Esophagus muscularis mucosa (tissue), 4 donors: ENCODE measurements at regions of chr1 and their contacts with region 1.

Region 1: GRCh38 chr1:33295450-33296081 is 25.3 kb downstream of the A3GALT2 start:
- DNase-seq: peak; percentile 96
- H3K4me3 ChIP-seq: no peak overlapping the region
- H3K27ac ChIP-seq: peak overlapping the region; percentile 48 to 75 (median 62)
- H3K4me1 ChIP-seq: peaks cover 16 to 55% (median 39%) of the 10 kb centered on the region in 4 donors
- H3K27me3 ChIP-seq: no peaks in the 10 kb centered on the region
- CTCF ChIP-seq: peak; percentile 97 to 99 (median 98)
- EP300 ChIP-seq: no peak
- POLR2A ChIP-seq: no peak

Region 2: DNA sequence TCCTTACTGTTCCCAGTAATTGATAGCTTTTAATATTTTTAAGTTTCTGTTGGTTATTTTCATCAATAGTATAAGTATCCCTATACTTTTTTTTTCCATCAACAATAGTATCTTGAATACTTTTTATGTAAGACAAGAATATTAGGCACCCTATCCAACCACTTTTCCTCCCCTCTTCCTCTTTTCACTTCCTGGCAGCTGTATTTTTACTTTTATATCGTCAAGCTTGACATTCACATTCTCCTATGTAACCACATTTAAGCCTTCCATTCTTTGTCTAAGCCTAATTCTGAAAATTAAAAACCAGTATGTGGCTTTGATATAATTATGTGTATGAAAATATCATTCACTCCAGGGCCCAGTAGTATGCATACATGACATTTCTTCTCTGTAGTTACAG is 1213.5 kb before region 1 on chr1:
- intact Hi-C with region 1: no loop called
- DNase-seq: no peak
- H3K4me3 ChIP-seq: no peak overlapping the region
- H3K27ac ChIP-seq: no peak overlapping the region
- H3K4me1 ChIP-seq: no peaks in the 10 kb centered on the region
- H3K27me3 ChIP-seq: no peaks in the 10 kb centered on the region
- CTCF ChIP-seq: no peak
- EP300 ChIP-seq: no peak
- POLR2A ChIP-seq: no peak

Region 3: GRCh38 chr1:33137800-33138199 is 157.8 kb before region 1 on chr1:
- intact Hi-C with region 1: loop called (anchors 10 kb)
- DNase-seq: no peak
- H3K4me3 ChIP-seq: no peak overlapping the region
- H3K27ac ChIP-seq: no peak overlapping the region
- H3K4me1 ChIP-seq: peaks cover 0 to 10% (median 8%) of the 10 kb centered on the region in 4 donors
- H3K27me3 ChIP-seq: no peaks in the 10 kb centered on the region
- CTCF ChIP-seq: peak; percentile 26 to 50 (median 39)
- EP300 ChIP-seq: no peak
- POLR2A ChIP-seq: no peak

Region 4: DNA sequence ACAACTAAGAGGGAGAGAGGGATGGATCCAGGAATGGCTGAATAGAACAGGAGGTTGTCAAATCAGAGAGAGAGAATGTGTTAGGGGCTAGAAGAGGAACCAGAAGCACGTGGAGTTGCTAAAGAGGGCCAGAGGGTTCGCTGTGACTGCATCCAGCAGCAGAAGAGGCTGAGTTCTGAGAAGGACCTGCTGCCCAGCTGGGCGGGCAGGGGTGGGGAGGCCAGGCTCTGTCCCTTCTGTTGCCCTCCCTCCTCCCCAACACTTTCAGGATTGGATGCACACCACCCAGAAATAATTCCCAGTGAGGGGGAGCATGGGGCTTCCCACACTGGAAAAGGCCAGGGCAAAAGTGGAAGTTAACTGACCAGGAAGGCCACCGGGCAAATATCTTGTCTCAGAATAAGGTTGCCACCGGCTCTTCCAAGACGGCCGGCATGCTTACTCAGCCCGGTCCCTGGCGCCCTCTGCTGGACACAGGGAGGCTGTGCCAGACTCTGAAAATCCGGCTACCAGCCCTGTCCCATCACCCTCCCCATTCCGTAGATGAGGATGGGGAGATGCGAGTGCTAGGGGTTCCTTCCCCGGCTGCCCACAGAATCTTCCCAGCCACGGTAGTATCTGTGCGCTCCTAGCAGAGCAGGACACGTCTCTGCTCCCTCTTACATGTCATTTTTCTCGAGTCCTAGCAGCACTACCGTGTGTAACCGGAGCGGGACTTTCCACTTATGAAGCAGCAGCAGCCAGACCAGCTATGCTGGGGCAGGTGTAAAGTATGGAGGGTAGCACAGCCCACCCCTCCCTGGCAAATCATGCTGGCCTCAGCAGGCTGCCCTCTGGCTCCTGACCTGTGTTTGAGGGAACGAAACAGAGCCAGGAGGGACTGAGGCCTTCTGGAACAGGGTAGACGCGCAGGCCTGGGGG is 72.2 kb after region 1 on chr1:
- intact Hi-C with region 1: loop called (anchors 1 kb)
- DNase-seq: no peak
- H3K4me3 ChIP-seq: peak overlapping the region in 1 of 4 donors; percentile 7
- H3K27ac ChIP-seq: peak overlapping the region; percentile 48 to 79 (median 66)
- H3K4me1 ChIP-seq: peaks cover 52 to 60% (median 56%) of the 10 kb centered on the region in 4 donors
- H3K27me3 ChIP-seq: no peaks in the 10 kb centered on the region
- CTCF ChIP-seq: peak; percentile 95 to 99 (median 98)
- EP300 ChIP-seq: no peak
- POLR2A ChIP-seq: no peak

Region 5: DNA sequence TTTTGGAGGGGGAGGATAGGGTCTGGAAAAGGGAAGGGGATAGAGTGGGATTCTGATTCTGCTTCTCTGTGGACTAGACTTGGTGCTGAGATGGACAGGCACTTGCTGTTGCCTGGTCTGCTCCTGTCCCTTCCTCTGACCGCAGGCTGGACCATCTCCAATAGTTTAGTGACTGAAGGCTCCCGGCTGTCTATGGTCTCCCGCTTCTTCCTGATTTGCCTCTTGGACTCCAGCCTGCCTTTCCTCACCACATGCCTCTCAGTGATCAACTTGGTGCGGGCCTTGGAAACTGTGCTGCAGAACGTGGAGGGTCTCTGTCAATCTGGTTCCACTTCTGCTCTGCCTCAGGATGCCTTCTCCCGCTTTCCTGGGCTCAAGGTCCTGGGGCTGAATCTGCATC is 170.6 kb after region 1 on chr1:
- intact Hi-C with region 1: loop called (anchors 5 kb)
- DNase-seq: no peak
- H3K4me3 ChIP-seq: no peak overlapping the region
- H3K27ac ChIP-seq: no peak overlapping the region
- H3K4me1 ChIP-seq: peaks cover 19 to 55% (median 36%) of the 10 kb centered on the region in 4 donors
- H3K27me3 ChIP-seq: no peaks in the 10 kb centered on the region
- CTCF ChIP-seq: no peak
- EP300 ChIP-seq: no peak
- POLR2A ChIP-seq: no peak